CD4-positive, alpha-beta T cell (primary cell): ENCODE measurements at regions of chr2 and their contacts with region 1.

Region 1: GRCh38 chr2:70301344-70302194 is at the start of gene FAM136A:
- DNase-seq: peak; percentile 78 to 95 (median 86)
- ATAC-seq: peak; percentile 89
- H3K4me3 ChIP-seq: peak within 1 kb of the TSS; percentile 68
- H3K4me3 Mint-ChIP-seq: peak within 1 kb of the TSS; percentile 92
- H3K27ac ChIP-seq: peak within 1 kb of the TSS; percentile 60 to 82
- H3K27ac Mint-ChIP-seq: peak within 1 kb of the TSS; percentile 83
- H3K4me1 ChIP-seq: peaks cover 25% of the 10 kb centered on the region
- H3K4me1 Mint-ChIP-seq: peaks cover 22% of the 10 kb centered on the region
- H3K27me3 ChIP-seq: no peaks in the 10 kb centered on the region
- H3K27me3 Mint-ChIP-seq: no peaks in the 10 kb centered on the region
- CTCF ChIP-seq: peak; percentile 81
- total RNA-seq, gene FAM136A: 30.6 to 31.4 TPM

Region 2: GRCh38 chr2:69724540-69725159 is 576.9 kb before region 1 on chr2:
- CTCF ChIA-PET with region 1: interaction called, 5 read pairs
- POLR2A ChIA-PET with region 1: no interaction called
- intact Hi-C with region 1: loop called (anchors 1 to 2 kb)
- DNase-seq: peak; percentile 69 to 91 (median 83)
- ATAC-seq: peak; percentile 85
- H3K4me3 ChIP-seq: no peak overlapping the region
- H3K4me3 Mint-ChIP-seq: peak overlapping the region; percentile 27
- H3K27ac ChIP-seq: no peak overlapping the region
- H3K27ac Mint-ChIP-seq: no peak overlapping the region
- H3K4me1 ChIP-seq: peaks cover 9% of the 10 kb centered on the region
- H3K4me1 Mint-ChIP-seq: peaks cover 7% of the 10 kb centered on the region
- H3K27me3 ChIP-seq: no peaks in the 10 kb centered on the region
- H3K27me3 Mint-ChIP-seq: no peaks in the 10 kb centered on the region
- CTCF ChIP-seq: peak; percentile 100

Region 3: DNA sequence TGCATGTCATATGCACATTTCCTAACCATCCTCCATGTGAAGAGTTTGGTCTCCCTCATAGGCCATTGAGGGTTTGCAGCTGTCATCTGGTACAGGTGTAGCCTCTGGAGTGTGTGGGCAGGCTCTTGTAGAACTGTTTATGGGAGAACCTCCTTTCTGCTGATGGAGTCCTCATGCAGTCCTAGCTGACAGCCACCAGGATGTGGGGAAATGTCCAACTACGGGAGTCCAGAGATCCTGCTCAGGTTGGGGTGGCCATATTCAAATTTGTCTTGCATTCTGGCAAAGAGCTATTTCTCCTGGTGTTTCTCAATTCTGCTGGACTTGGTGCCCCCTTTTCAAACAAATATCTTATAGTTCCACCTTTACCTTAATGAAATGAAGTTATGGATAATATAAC is 31.7 kb after region 1 on chr2:
- CTCF ChIA-PET with region 1: no interaction called
- POLR2A ChIA-PET with region 1: no interaction called
- intact Hi-C with region 1: no loop called
- DNase-seq: no peak
- ATAC-seq: no peak
- H3K4me3 ChIP-seq: no peak overlapping the region
- H3K4me3 Mint-ChIP-seq: no peak overlapping the region
- H3K27ac ChIP-seq: no peak overlapping the region
- H3K27ac Mint-ChIP-seq: no peak overlapping the region
- H3K4me1 ChIP-seq: no peaks in the 10 kb centered on the region
- H3K4me1 Mint-ChIP-seq: no peaks in the 10 kb centered on the region
- H3K27me3 ChIP-seq: no peaks in the 10 kb centered on the region
- H3K27me3 Mint-ChIP-seq: no peaks in the 10 kb centered on the region
- CTCF ChIP-seq: no peak

Region 4: DNA sequence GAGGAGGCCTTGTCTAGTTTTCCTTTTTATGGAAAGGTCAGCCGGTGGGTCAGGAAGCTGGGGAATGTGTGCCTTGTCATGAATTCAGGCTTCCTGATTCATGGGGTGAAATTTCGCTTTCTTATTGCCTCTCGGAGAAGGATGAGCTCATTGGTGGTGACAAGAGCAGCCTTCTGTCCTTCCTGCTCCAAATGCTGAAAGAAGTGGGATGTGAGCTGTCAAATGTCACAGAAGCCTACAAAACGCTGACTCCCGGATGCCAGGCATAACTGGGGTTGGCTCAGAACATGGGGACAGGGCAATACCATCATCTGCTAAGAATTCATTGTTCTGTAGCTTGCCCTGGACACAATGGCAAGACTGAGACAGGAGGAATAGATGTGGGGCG is 56.1 kb after region 1 on chr2:
- CTCF ChIA-PET with region 1: no interaction called
- POLR2A ChIA-PET with region 1: no interaction called
- intact Hi-C with region 1: no loop called
- DNase-seq: no peak
- ATAC-seq: no peak
- H3K4me3 ChIP-seq: no peak overlapping the region
- H3K4me3 Mint-ChIP-seq: no peak overlapping the region
- H3K27ac ChIP-seq: no peak overlapping the region
- H3K27ac Mint-ChIP-seq: no peak overlapping the region
- H3K4me1 ChIP-seq: no peaks in the 10 kb centered on the region
- H3K4me1 Mint-ChIP-seq: no peaks in the 10 kb centered on the region
- H3K27me3 ChIP-seq: no peaks in the 10 kb centered on the region
- H3K27me3 Mint-ChIP-seq: no peaks in the 10 kb centered on the region
- CTCF ChIP-seq: no peak

Region 5: GRCh38 chr2:70616168-70616694 is 314.7 kb after region 1 on chr2:
- CTCF ChIA-PET with region 1: interaction called, 11 read pairs
- POLR2A ChIA-PET with region 1: interaction called, 5 read pairs
- intact Hi-C with region 1: loop called (anchors 1 kb)
- DNase-seq: no peak
- ATAC-seq: no peak
- H3K4me3 ChIP-seq: no peak overlapping the region
- H3K4me3 Mint-ChIP-seq: no peak overlapping the region
- H3K27ac ChIP-seq: no peak overlapping the region
- H3K27ac Mint-ChIP-seq: no peak overlapping the region
- H3K4me1 ChIP-seq: no peaks in the 10 kb centered on the region
- H3K4me1 Mint-ChIP-seq: no peaks in the 10 kb centered on the region
- H3K27me3 ChIP-seq: peaks cover 0 to under 1% of the 10 kb centered on the region in 2 experiments
- H3K27me3 Mint-ChIP-seq: no peaks in the 10 kb centered on the region
- CTCF ChIP-seq: no peak

Region 6: DNA sequence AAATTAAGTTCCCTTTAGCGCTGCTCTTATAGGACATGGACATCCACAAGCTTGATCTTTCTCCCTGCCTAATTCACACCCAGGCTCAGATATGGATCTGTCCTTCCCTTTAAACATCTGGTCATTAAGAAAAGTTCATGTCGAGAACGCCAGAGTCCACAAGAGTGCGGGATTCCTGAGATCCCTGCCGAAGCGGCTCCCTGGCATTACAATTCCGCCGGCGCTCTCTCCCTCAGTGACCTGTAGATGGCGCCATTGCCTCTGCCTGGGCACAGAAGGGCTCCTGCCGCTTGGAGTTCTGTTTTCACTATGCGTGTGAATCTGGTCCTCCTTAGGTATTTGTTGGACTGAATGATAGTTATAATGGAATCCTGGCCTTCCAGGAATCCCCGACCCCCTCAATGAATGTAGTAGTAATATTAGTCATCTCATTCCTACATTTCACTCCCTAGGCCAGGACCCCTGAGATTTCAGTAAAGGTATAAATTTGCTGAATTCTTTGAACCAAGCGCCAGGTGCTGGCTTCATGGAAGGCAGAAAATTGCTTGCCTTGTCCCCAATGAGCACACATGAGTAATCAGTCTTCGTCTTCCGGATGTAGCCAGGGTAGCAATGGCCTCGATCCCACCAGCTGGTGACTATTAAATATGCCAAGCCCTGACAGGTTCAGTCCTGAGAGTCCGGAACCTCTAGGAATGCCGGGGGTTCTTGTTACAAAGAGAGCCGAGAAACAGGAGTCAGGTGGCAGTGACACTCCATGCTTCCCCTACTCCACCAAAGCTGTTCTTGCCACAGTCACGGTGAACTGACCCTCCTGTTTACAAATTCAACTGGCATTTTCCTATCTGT is 560.4 kb after region 1 on chr2:
- CTCF ChIA-PET with region 1: no interaction called
- POLR2A ChIA-PET with region 1: no interaction called
- intact Hi-C with region 1: loop called in 1 of 2 experiments (anchors 5 kb)
- DNase-seq: peak; percentile 51 to 84 (median 60)
- ATAC-seq: peak; percentile 74
- H3K4me3 ChIP-seq: no peak overlapping the region
- H3K4me3 Mint-ChIP-seq: no peak overlapping the region
- H3K27ac ChIP-seq: no peak overlapping the region
- H3K27ac Mint-ChIP-seq: no peak overlapping the region
- H3K4me1 ChIP-seq: peaks cover 6% of the 10 kb centered on the region
- H3K4me1 Mint-ChIP-seq: peaks cover 5% of the 10 kb centered on the region
- H3K27me3 ChIP-seq: peaks cover 14 to 20% of the 10 kb centered on the region in 2 experiments
- H3K27me3 Mint-ChIP-seq: peaks cover 50% of the 10 kb centered on the region
- CTCF ChIP-seq: peak; percentile 89

Region 7: DNA sequence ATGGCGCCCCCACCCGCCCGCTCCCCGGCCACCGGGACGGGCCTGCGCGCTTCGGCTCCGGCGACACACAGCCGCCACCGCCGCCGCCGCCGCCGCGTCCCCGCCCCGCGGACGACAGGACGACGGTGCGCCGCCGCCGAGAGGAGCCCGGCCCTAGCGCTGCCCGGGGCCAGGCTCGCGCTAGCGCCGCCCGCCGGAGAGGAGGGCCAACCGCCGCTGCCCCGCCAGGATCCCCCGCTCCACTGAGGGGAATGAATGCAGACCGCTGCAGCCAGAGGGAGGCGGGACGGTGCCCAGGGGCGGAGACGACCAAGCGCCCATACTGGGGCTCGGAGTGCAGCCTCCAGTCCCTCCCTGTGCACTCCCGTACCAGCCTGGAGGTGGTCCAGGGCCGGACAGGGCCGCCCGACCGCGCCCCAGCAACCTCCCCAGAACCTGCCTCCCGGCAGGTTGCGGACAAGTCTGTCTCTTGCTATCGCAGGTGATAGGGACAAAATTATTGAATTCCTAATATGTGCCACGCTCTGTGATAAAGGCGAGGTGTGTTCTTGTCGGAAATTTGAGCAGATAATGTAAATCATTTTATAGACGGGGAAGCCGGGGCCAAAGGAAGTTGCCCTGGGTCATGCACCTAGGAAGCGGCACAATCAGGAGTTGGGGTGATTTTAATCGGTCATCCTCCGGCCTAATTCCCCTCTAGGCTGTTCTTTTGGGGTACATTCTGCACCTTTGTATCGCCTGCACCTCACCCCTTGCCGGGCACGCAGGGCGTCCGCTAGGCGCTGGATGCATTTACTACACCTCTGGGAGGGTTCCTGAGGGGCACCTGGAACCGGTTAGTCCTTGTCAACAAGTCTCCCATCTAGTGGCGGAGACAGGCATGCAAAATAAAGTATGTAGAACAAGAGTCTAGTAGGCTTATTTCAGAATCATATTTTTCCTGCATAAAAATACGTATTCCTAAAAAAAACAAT is 693.5 kb after region 1 on chr2 and contains the start of gene TEX261:
- CTCF ChIA-PET with region 1: no interaction called
- POLR2A ChIA-PET with region 1: no interaction called
- intact Hi-C with region 1: loop called in 1 of 2 experiments (anchors 5 kb)
- DNase-seq: peak; percentile 78 to 95 (median 89)
- ATAC-seq: peak; percentile 92
- H3K4me3 ChIP-seq: peak within 1 kb of the TSS; percentile 90
- H3K4me3 Mint-ChIP-seq: peak within 1 kb of the TSS; percentile 99
- H3K27ac ChIP-seq: peak within 1 kb of the TSS; percentile 35 to 62
- H3K27ac Mint-ChIP-seq: peak within 1 kb of the TSS; percentile 90
- H3K4me1 ChIP-seq: peaks cover 33% of the 10 kb centered on the region
- H3K4me1 Mint-ChIP-seq: peaks cover 37% of the 10 kb centered on the region
- H3K27me3 ChIP-seq: no peaks in the 10 kb centered on the region
- H3K27me3 Mint-ChIP-seq: no peaks in the 10 kb centered on the region
- CTCF ChIP-seq: peak; percentile 58
- total RNA-seq, gene TEX261: 26.8 to 34.0 TPM